ENCODE measurements at regions of chr11 and their contacts with region 1.

Region 1: DNA sequence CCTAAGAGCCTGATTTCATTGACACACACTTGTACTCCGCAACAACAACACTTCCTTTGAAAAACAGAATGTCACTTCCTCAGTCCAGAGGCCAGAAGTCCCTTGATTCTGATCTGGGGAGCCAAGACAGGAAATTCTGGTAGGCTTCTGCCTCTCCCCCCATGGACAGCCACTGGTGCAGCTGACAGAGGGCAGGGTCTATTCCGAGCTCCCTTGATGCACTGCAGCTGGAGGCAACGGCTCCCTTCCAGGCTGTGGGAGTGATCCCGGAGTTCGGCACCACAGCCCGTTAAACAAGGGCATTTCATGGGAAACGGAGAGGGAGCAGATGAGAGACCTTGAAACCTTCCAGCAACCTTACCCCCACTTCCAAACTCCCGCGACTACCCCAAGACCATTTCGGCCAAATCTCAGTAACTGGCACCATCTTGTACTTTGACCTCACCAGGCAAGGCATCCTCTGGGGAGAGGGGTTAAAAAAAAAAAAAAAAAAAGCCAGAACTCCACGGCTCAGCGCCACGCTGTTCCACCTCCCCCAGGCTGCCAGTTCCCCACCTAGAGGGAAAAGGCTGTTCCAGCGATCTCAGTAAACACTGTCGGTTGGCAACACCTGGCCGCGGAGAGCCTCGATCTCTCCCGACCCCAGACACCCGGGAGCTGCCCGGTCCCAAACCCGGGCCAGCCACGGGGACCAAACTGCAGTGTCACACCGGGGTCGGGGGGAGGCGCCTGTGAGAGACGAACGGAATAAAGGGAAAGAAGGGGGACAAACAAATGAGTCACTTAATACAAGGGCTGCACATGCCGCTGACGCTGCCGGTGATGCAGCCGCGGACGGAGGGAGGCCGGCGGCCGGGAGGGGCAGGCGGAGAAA is 1.1 kb downstream of the GAB2 start:
- DNase-seq: peak; percentile 76 to 84
- H3K4me3 ChIP-seq: peak overlapping the region; percentile 13 to 68 (median 65)
- H3K27ac ChIP-seq: peak overlapping the region; percentile 76 to 97 (median 90)
- H3K4me1 ChIP-seq: peaks cover 24 to 27% of the 10 kb centered on the region in 2 donors
- H3K27me3 ChIP-seq: no peaks in the 10 kb centered on the region
- CTCF ChIP-seq: peak; percentile 24 to 64 (median 42)
- POLR2A ChIP-seq: peak in 1 of 2 donors; percentile 62

Region 2: GRCh38 chr11:78079232-78080083 is 337.1 kb before region 1 on chr11 and contains the start of gene NDUFC2:
- intact Hi-C with region 1: loop called (anchors 10 kb)
- DNase-seq: peak; percentile 82 to 83
- H3K4me3 ChIP-seq: peak within 1 kb of the TSS; percentile 61 to 97 (median 88)
- H3K27ac ChIP-seq: peak within 1 kb of the TSS; percentile 92 to 97 (median 95)
- H3K4me1 ChIP-seq: peaks cover 28 to 42% of the 10 kb centered on the region in 2 donors
- H3K27me3 ChIP-seq: no peaks in the 10 kb centered on the region
- CTCF ChIP-seq: peak in 1 of 6 experiments; percentile 21
- POLR2A ChIP-seq: peak in 1 of 2 donors; percentile 80
- total RNA-seq, gene NDUFC2: 205 to 342 (median 228) TPM

Region 3: DNA sequence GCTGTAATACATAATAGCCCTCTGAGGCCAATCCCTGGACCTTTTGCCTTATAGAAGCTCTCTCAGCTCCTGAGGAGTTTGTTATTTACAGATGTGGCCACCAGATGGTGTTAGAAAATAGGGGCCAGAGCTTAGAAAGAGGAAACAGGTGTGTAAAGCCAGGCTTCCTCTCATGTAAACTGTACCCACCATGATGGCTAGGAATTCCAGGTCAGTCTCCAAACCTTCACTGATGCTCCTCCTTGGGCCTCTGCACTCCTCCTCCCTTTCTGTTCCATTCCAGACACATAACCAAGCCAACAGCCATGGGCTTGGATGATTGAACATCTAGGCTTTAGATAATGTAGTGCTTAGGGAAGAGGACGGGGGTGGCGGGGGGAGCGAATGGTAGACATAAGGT is 188.1 kb before region 1 on chr11:
- intact Hi-C with region 1: loop called (anchors 10 kb)
- DNase-seq: peak in 1 of 2 donors; percentile 14
- H3K4me3 ChIP-seq: no peak overlapping the region
- H3K27ac ChIP-seq: no peak overlapping the region
- H3K4me1 ChIP-seq: peaks cover 0 to 10% of the 10 kb centered on the region in 2 donors
- H3K27me3 ChIP-seq: no peaks in the 10 kb centered on the region
- CTCF ChIP-seq: peak; percentile 20 to 65 (median 50)
- POLR2A ChIP-seq: no peak

Region 4: GRCh38 chr11:78349624-78350023 is 66.9 kb before region 1 on chr11:
- intact Hi-C with region 1: loop called (anchors 10 kb)
- DNase-seq: no peak
- H3K4me3 ChIP-seq: no peak overlapping the region
- H3K27ac ChIP-seq: peak overlapping the region; percentile 79 to 87 (median 81)
- H3K4me1 ChIP-seq: peaks cover 23 to 49% of the 10 kb centered on the region in 2 donors
- H3K27me3 ChIP-seq: no peaks in the 10 kb centered on the region
- CTCF ChIP-seq: no peak
- POLR2A ChIP-seq: no peak

Region 5: DNA sequence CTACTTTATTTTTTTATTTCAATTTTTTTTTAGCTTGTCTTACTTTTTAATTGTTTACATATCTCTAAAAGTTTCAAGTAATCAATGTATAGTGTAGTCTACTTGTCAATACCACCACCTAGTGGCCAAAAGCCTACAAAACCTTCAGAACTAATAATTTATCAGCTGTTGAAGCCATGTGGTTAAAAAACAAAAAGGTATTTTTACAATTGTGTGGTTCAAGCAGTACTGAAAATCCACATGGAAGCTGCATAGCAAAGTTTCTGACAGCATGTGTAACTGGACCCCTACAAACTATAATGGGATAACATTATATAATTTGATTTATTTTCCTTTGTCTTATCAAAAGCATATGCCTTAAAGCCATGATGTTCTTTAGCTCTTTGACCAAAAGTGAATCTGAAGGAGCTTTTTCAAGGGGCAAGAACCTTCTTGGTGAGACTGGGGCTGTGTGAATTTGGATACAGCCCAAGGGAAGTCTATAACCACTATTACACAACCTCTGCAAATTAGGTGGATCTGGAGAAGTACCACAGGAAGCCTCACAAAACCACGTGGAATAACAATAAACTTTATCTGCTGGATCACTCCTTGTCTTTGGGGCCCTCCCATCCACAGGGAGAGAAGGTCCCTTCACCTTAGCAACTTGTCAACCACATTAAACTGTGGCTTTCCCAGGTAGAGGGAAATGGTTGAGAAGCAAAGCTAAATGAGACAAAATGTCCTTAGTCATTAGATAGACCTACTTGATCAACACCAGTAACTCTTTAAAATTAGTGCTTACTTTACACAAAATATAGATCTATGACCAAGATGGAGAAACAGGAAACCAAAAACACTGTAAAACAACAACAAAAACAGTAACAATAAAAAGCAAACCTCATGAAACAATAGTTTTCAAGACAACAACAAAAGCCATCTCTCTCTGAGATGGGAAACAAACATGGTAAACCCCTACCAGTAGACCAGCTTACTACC is 148.2 kb after region 1 on chr11:
- intact Hi-C with region 1: loop called (anchors 10 kb)
- DNase-seq: peak in 1 of 2 donors; percentile 5
- H3K4me3 ChIP-seq: no peak overlapping the region
- H3K27ac ChIP-seq: no peak overlapping the region
- H3K4me1 ChIP-seq: no peaks in the 10 kb centered on the region
- H3K27me3 ChIP-seq: no peaks in the 10 kb centered on the region
- CTCF ChIP-seq: peak; percentile 38 to 80 (median 66)
- POLR2A ChIP-seq: no peak

Measured in thyroid gland (tissue), 4 donors.